GM23248 (cell line): ENCODE measurements at regions of chr4 and their contacts with region 1.

Region 1: GRCh38 chr4:40736910-40737309 is 12.8 kb upstream of the NSUN7 start:
- DNase-seq: peak; percentile 59
- H3K4me3 ChIP-seq: no peak overlapping the region
- H3K27ac ChIP-seq: no peak overlapping the region
- H3K4me1 ChIP-seq: no peaks in the 10 kb centered on the region
- H3K27me3 ChIP-seq: no peaks in the 10 kb centered on the region

Region 2: DNA sequence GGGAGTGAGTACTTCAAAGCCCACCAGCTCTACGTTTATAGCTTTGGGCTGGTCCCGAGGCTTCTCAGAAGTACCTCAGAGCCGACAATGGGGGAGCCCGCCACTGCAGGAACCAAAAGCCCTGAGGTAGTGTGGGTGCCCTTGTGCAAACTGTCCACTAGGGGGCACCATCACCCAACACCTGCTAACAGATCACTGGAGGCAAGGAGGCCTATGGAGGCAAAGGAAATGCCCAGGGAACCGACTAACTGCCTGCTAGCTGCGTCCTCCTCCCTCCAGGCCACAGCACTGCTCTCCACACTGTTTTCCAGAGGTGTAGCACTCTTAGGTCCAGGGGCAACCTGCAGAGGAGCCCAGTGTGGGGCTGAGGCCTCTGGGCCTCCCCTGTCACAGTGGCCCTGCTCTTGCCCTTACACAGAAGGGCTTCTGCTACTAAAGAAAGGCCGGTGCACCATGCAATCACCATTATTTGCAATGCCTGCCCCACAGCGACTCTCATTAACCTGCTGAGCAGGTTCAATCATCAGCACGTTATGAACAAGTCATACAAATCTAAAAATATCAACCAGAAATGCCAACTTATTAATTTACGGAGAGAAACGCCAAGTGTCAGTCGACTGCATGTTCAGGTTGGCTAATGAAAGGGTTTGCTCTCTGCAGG is 171.9 kb after region 1 on chr4:
- in situ Hi-C with region 1: loop called (anchors 10 kb)
- DNase-seq: peak; percentile 86
- H3K4me3 ChIP-seq: no peak overlapping the region
- H3K27ac ChIP-seq: peak overlapping the region; percentile 76
- H3K4me1 ChIP-seq: peaks cover 16% of the 10 kb centered on the region
- H3K27me3 ChIP-seq: no peaks in the 10 kb centered on the region